ENCODE measurements at regions of chr4 and their contacts with region 1.

Region 1: GRCh38 chr4:81084029-81084428 is 53.5 kb downstream of the BMP3 start:
- DNase-seq: peak; percentile 86
- H3K4me3 ChIP-seq: no peak overlapping the region
- H3K27ac ChIP-seq: no peak overlapping the region
- H3K4me1 ChIP-seq: peaks cover 12% of the 10 kb centered on the region
- H3K27me3 ChIP-seq: no peaks in the 10 kb centered on the region

Region 2: DNA sequence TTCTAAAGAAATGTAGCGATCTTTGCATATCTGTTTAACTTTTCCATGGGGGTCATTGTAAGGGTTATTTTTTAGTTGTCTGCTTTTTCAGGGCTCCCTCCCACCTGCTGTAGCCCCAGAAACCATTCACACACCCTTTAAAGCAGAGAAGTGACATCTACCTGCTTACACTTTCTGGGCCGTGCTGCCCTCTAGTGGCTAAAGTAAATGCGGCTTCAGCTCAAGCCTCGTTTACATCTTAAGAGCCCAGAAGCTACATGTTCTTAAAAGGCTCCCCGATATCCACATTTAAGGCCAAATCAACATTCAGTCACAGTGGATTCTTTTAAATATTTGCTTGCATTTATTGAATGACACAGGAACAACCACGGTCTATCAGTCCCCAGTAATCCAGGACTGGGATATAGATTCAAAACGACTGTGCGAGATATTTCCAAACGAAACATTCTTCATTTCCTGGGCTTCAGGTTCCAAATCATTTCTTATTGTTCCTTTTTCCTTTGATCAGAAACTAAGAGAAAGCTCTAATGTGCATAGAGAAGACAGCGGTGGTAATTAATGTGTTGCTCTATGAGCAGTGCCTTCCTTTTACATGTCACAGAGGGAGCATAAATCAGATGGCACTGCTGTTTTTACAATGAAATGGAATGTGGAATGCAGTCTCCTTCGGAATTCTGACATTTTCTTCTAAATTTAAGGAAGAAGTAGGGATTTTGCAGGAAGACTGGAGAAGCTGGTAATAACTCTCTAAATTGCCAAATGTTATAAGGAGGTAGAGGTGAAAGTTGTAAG is 267.8 kb after region 1 on chr4:
- in situ Hi-C with region 1: loop called (anchors 5 kb)
- DNase-seq: peak; percentile 73
- H3K4me3 ChIP-seq: peak overlapping the region; percentile 56
- H3K27ac ChIP-seq: no peak overlapping the region
- H3K4me1 ChIP-seq: peaks cover 25% of the 10 kb centered on the region
- H3K27me3 ChIP-seq: no peaks in the 10 kb centered on the region